CD8-positive, alpha-beta T cell (primary cell): ENCODE measurements at regions of chr3 and their contacts with region 1.

Region 1: DNA sequence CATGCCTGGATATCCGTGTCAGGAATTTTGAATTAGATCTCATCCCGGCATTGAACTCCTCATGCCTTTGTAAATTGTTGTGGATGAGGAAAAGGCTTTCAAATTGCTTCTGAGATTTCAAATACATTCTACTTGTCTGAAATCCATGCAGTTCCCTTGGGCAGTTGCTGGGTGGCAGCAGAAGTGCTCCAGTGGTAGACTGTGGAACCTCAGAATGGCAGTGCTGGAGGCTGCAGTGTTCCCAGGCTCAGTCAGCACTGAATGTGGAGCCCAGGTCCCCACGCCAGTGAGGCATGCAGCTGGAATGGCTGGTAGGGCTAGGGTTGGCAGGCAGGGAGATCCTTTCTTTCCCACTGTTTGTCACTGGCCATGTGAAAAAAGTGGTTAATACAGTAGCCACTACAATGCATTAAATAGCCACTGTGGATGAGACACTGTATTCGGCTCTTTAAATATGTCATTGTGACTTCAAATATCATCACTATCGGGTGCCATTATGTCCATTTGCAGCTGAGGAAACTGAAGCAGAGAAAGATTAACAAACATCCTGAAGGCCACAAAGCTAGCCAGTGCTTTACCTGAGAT is 98.6 kb downstream of the TPRG1 start:
- DNase-seq: peak in 6 of 9 experiments; percentile 3 to 50 (median 24)
- ATAC-seq: no peak
- H3K4me3 ChIP-seq: no peak overlapping the region
- H3K4me3 Mint-ChIP-seq: no peak overlapping the region
- H3K27ac ChIP-seq: no peak overlapping the region
- H3K27ac Mint-ChIP-seq: no peak overlapping the region
- H3K4me1 ChIP-seq: no peaks in the 10 kb centered on the region
- H3K4me1 Mint-ChIP-seq: peaks cover 14% of the 10 kb centered on the region
- H3K27me3 ChIP-seq: no peaks in the 10 kb centered on the region
- H3K27me3 Mint-ChIP-seq: no peaks in the 10 kb centered on the region
- CTCF ChIP-seq: no peak

Region 2: GRCh38 chr3:189001559-189001958 is 268.8 kb before region 1 on chr3:
- CTCF ChIA-PET with region 1: no interaction called
- POLR2A ChIA-PET with region 1: no interaction called
- intact Hi-C with region 1: no loop called
- DNase-seq: no peak
- ATAC-seq: no peak
- H3K4me3 ChIP-seq: no peak overlapping the region
- H3K4me3 Mint-ChIP-seq: no peak overlapping the region
- H3K27ac ChIP-seq: no peak overlapping the region
- H3K27ac Mint-ChIP-seq: no peak overlapping the region
- H3K4me1 ChIP-seq: no peaks in the 10 kb centered on the region
- H3K4me1 Mint-ChIP-seq: no peaks in the 10 kb centered on the region
- H3K27me3 ChIP-seq: no peaks in the 10 kb centered on the region
- H3K27me3 Mint-ChIP-seq: no peaks in the 10 kb centered on the region
- CTCF ChIP-seq: no peak

Region 3: DNA sequence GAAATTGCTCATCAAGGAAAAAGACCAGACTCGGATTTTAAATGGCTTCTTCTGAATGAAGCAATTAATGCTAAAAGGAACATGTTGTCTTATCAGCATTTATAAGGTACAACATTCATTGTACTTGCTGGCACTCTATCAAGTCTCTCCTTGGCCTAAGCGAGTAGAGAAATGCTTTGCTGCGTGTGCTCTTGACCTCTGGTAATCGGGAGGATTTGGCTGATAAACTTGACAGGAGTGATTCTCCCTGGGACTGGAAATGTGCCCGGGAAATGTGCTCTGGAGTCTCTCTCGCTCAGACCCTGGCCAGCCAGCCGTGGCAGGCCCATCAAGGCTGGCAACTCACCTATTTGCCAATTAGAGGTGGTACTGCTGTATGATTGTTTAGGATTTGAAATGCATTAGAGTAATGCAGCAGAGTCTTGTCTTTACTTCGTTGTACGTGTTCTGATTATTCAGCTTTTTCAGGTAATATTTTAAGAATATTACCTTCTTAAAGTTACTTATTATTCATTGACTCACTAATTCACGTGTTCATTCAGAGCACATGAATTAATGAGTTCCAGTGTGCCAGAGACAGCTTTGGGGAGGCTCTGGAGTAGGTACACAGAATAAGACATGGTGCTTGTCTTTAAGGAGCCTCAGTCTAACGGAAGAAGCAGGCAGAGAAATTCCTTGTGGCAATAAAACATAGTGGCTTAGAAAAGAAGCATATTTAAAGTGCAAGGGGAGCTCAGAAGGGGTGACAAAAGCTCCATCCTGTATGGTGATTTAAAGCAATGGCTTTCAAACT is 146.5 kb before region 1 on chr3:
- CTCF ChIA-PET with region 1: no interaction called
- POLR2A ChIA-PET with region 1: no interaction called
- intact Hi-C with region 1: no loop called
- DNase-seq: no peak
- ATAC-seq: no peak
- H3K4me3 ChIP-seq: peak overlapping the region in 1 of 2 experiments; percentile 49
- H3K4me3 Mint-ChIP-seq: peak overlapping the region; percentile 77
- H3K27ac ChIP-seq: peak overlapping the region in 1 of 2 experiments; percentile 86
- H3K27ac Mint-ChIP-seq: peak overlapping the region; percentile 47
- H3K4me1 ChIP-seq: peaks cover 7% of the 10 kb centered on the region
- H3K4me1 Mint-ChIP-seq: peaks cover 33% of the 10 kb centered on the region
- H3K27me3 ChIP-seq: no peaks in the 10 kb centered on the region
- H3K27me3 Mint-ChIP-seq: no peaks in the 10 kb centered on the region
- CTCF ChIP-seq: no peak

Region 4: GRCh38 chr3:189355481-189356201 is 85.3 kb after region 1 on chr3:
- CTCF ChIA-PET with region 1: interaction called, 10 read pairs
- POLR2A ChIA-PET with region 1: interaction called, 7 read pairs
- intact Hi-C with region 1: loop called in 1 of 2 experiments (anchors 5 kb)
- DNase-seq: peak in 8 of 9 experiments; percentile 23 to 80 (median 52)
- ATAC-seq: peak; percentile 91
- H3K4me3 ChIP-seq: no peak overlapping the region
- H3K4me3 Mint-ChIP-seq: peak overlapping the region; percentile 60
- H3K27ac ChIP-seq: peak overlapping the region in 1 of 2 experiments; percentile 47
- H3K27ac Mint-ChIP-seq: peak overlapping the region; percentile 88
- H3K4me1 ChIP-seq: peaks cover 15% of the 10 kb centered on the region
- H3K4me1 Mint-ChIP-seq: peaks cover 26% of the 10 kb centered on the region
- H3K27me3 ChIP-seq: no peaks in the 10 kb centered on the region
- H3K27me3 Mint-ChIP-seq: no peaks in the 10 kb centered on the region
- CTCF ChIP-seq: no peak

Region 5: DNA sequence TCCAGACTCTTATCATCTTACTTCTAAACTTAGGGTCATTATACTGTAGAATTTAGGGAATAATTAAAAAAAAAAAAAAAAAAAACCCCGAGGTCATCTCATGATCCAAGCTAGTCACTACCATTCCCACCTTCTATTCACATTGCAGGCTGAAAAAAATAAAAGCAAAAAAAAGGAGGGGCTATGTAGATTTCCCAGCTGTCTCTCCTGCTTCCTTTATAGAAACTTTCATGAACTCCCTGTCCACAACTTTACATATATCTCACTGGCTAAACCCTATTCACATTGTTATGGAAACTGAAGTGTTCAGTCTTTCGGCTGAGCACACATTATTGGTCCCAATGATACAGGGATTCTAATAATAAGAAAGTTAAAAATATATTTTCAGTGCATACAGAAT is 204.6 kb after region 1 on chr3:
- CTCF ChIA-PET with region 1: no interaction called
- POLR2A ChIA-PET with region 1: no interaction called
- intact Hi-C with region 1: loop called in 1 of 2 experiments (anchors 5 kb)
- DNase-seq: no peak
- ATAC-seq: no peak
- H3K4me3 ChIP-seq: no peak overlapping the region
- H3K4me3 Mint-ChIP-seq: no peak overlapping the region
- H3K27ac ChIP-seq: no peak overlapping the region
- H3K27ac Mint-ChIP-seq: no peak overlapping the region
- H3K4me1 ChIP-seq: no peaks in the 10 kb centered on the region
- H3K4me1 Mint-ChIP-seq: no peaks in the 10 kb centered on the region
- H3K27me3 ChIP-seq: no peaks in the 10 kb centered on the region
- H3K27me3 Mint-ChIP-seq: no peaks in the 10 kb centered on the region
- CTCF ChIP-seq: no peak

Region 6: DNA sequence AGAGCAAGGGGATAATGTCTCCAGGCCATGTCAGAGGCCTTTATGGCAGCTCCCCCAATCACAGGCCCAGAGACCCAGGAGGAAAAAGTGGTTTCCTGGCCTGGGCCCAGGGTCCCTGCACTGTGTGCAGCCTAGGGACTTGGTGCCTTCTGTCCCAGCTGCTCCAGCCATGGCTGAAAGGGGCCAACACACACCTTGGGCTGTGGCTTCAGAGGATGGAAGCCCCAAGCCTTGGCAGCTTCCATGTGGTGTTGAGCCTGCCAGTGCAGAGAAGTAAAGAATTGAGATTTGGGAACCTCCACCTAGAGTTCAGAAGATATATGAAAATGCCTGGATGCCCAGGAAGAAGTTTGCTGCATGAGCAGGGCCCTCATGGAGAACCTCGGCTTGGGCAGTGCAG is 342.8 kb after region 1 on chr3:
- CTCF ChIA-PET with region 1: no interaction called
- POLR2A ChIA-PET with region 1: no interaction called
- intact Hi-C with region 1: loop called in 1 of 2 experiments (anchors 10 kb)
- DNase-seq: no peak
- ATAC-seq: no peak
- H3K4me3 ChIP-seq: no peak overlapping the region
- H3K4me3 Mint-ChIP-seq: no peak overlapping the region
- H3K27ac ChIP-seq: no peak overlapping the region
- H3K27ac Mint-ChIP-seq: no peak overlapping the region
- H3K4me1 ChIP-seq: no peaks in the 10 kb centered on the region
- H3K4me1 Mint-ChIP-seq: no peaks in the 10 kb centered on the region
- H3K27me3 ChIP-seq: no peaks in the 10 kb centered on the region
- H3K27me3 Mint-ChIP-seq: no peaks in the 10 kb centered on the region
- CTCF ChIP-seq: no peak

Region 7: GRCh38 chr3:189947948-189948723 is 677.8 kb after region 1 on chr3:
- CTCF ChIA-PET with region 1: interaction called, 10 read pairs
- POLR2A ChIA-PET with region 1: no interaction called
- intact Hi-C with region 1: loop called in 1 of 2 experiments (anchors 2 kb)
- DNase-seq: peak in 1 of 9 experiments; percentile 18
- ATAC-seq: no peak
- H3K4me3 ChIP-seq: no peak overlapping the region
- H3K4me3 Mint-ChIP-seq: no peak overlapping the region
- H3K27ac ChIP-seq: no peak overlapping the region
- H3K27ac Mint-ChIP-seq: no peak overlapping the region
- H3K4me1 ChIP-seq: no peaks in the 10 kb centered on the region
- H3K4me1 Mint-ChIP-seq: peaks cover 4% of the 10 kb centered on the region
- H3K27me3 ChIP-seq: no peaks in the 10 kb centered on the region
- H3K27me3 Mint-ChIP-seq: peaks cover 7% of the 10 kb centered on the region
- CTCF ChIP-seq: no peak

Region 8: GRCh38 chr3:189961525-189962161 is 691.3 kb after region 1 on chr3:
- CTCF ChIA-PET with region 1: interaction called, 6 read pairs
- POLR2A ChIA-PET with region 1: no interaction called
- intact Hi-C with region 1: loop called in 1 of 2 experiments (anchors 5 kb)
- DNase-seq: peak; percentile 11 to 71 (median 57)
- ATAC-seq: peak; percentile 69
- H3K4me3 ChIP-seq: no peak overlapping the region
- H3K4me3 Mint-ChIP-seq: no peak overlapping the region
- H3K27ac ChIP-seq: no peak overlapping the region
- H3K27ac Mint-ChIP-seq: no peak overlapping the region
- H3K4me1 ChIP-seq: no peaks in the 10 kb centered on the region
- H3K4me1 Mint-ChIP-seq: peaks cover 4% of the 10 kb centered on the region
- H3K27me3 ChIP-seq: no peaks in the 10 kb centered on the region
- H3K27me3 Mint-ChIP-seq: peaks cover 23% of the 10 kb centered on the region
- CTCF ChIP-seq: peak; percentile 97

Region 9: GRCh38 chr3:190321789-190322603 is 1051.7 kb after region 1 on chr3 and contains the start of gene CLDN1:
- CTCF ChIA-PET with region 1: interaction called, 3 read pairs
- POLR2A ChIA-PET with region 1: no interaction called
- intact Hi-C with region 1: loop called in 1 of 2 experiments (anchors 10 kb)
- DNase-seq: peak; percentile 35 to 84 (median 68)
- ATAC-seq: peak; percentile 91
- H3K4me3 ChIP-seq: peak within 1 kb of the TSS; percentile 42 to 56
- H3K4me3 Mint-ChIP-seq: peak within 1 kb of the TSS; percentile 68
- H3K27ac ChIP-seq: no peak within 1 kb of the TSS
- H3K27ac Mint-ChIP-seq: no peak within 1 kb of the TSS
- H3K4me1 ChIP-seq: peaks cover 13% of the 10 kb centered on the region
- H3K4me1 Mint-ChIP-seq: peaks cover 14% of the 10 kb centered on the region
- H3K27me3 ChIP-seq: peaks cover 4 to 6% of the 10 kb centered on the region in 2 experiments
- H3K27me3 Mint-ChIP-seq: peaks cover 32% of the 10 kb centered on the region
- CTCF ChIP-seq: peak; percentile 82
- total RNA-seq, gene CLDN1: not detected